ENCODE measurements at regions of chr6 and their contacts with region 1.

Region 1: DNA sequence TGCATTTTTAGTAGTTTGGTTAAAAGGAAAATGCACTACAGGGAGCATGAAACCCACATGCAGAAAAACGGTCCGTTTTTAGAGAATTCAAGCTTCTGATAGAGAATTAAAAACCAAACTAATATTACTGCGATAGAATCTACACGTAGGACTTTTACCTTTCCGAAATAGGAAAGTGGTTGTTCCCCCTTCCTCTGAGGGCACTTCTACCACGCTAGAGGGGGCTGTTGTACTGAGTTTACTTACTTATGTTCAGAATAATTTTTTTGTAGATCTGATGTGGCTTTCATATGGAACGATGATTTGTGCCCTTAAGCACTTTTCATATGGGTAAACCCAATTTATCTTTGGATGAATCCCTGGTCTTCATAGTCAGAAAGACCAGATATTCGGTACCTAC is 264.3 kb upstream of the PLN start:
- DNase-seq: peak; percentile 69
- H3K4me3 ChIP-seq: no peak overlapping the region
- H3K27ac ChIP-seq: no peak overlapping the region
- H3K4me1 ChIP-seq: peaks cover 0 to 32% (median 20%) of the 10 kb centered on the region in 4 donors
- H3K27me3 ChIP-seq: no peaks in the 10 kb centered on the region
- CTCF ChIP-seq: peak; percentile 38 to 78 (median 53)
- EP300 ChIP-seq: no peak
- POLR2A ChIP-seq: no peak

Region 2: GRCh38 chr6:118042855-118043254 is 240.9 kb before region 1 on chr6:
- intact Hi-C with region 1: no loop called
- DNase-seq: no peak
- H3K4me3 ChIP-seq: no peak overlapping the region
- H3K27ac ChIP-seq: no peak overlapping the region
- H3K4me1 ChIP-seq: no peaks in the 10 kb centered on the region
- H3K27me3 ChIP-seq: no peaks in the 10 kb centered on the region
- CTCF ChIP-seq: no peak
- EP300 ChIP-seq: no peak
- POLR2A ChIP-seq: no peak

Region 3: GRCh38 chr6:118354641-118355040 is 70.9 kb after region 1 on chr6:
- intact Hi-C with region 1: loop called (anchors 5 kb)
- DNase-seq: no peak
- H3K4me3 ChIP-seq: no peak overlapping the region
- H3K27ac ChIP-seq: no peak overlapping the region
- H3K4me1 ChIP-seq: peaks cover 0 to 49% (median 19%) of the 10 kb centered on the region in 4 donors
- H3K27me3 ChIP-seq: no peaks in the 10 kb centered on the region
- CTCF ChIP-seq: no peak
- EP300 ChIP-seq: no peak
- POLR2A ChIP-seq: no peak

Region 4: DNA sequence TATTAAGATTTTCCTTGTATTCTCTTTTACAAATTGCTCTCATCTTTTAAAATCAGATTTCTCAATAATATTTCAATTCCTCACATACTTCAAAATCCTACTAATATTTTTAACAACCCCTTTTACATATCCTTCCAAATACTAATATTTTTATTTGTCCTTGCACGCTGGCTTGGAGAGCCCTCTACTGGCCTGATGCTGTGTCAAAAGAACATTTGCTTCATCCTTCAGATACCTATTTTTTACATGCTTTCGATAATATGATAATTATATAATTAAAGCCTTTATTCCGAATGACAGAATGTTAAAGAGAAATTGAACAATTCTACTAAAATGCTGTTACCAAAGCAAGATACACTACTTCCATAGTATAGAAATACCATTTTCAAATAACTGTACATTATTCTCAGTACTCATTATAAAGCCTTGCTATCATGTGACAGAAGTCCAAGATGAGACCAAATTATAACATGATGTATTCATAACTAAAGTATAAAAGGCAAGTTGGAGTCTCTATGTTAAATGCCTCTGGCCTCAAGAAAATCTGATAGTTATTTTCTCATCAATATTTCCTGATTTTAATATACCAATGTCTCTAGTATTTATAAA is 225.3 kb after region 1 on chr6:
- intact Hi-C with region 1: loop called (anchors 2 kb)
- DNase-seq: no peak
- H3K4me3 ChIP-seq: no peak overlapping the region
- H3K27ac ChIP-seq: no peak overlapping the region
- H3K4me1 ChIP-seq: peaks cover 0 to 13% (median 5%) of the 10 kb centered on the region in 4 donors
- H3K27me3 ChIP-seq: no peaks in the 10 kb centered on the region
- CTCF ChIP-seq: peak; percentile 15 to 71 (median 43)
- EP300 ChIP-seq: no peak
- POLR2A ChIP-seq: no peak

Region 5: GRCh38 chr6:118551063-118552053 is 267.6 kb after region 1 on chr6:
- intact Hi-C with region 1: loop called (anchors 2 kb)
- DNase-seq: no peak
- H3K4me3 ChIP-seq: peak overlapping the region in 3 of 4 donors; percentile 42 to 59 (median 55)
- H3K27ac ChIP-seq: peak overlapping the region; percentile 58 to 84 (median 78)
- H3K4me1 ChIP-seq: peaks cover 0 to 55% (median 38%) of the 10 kb centered on the region in 4 donors
- H3K27me3 ChIP-seq: no peaks in the 10 kb centered on the region
- CTCF ChIP-seq: peak in 3 of 4 experiments; percentile 49 to 62 (median 56)
- EP300 ChIP-seq: no peak
- POLR2A ChIP-seq: no peak

Region 6: GRCh38 chr6:118580585-118581419 is 297.0 kb after region 1 on chr6:
- intact Hi-C with region 1: loop called (anchors 1 kb)
- DNase-seq: peak; percentile 66
- H3K4me3 ChIP-seq: no peak overlapping the region
- H3K27ac ChIP-seq: peak overlapping the region in 1 of 4 donors; percentile 33
- H3K4me1 ChIP-seq: peaks cover 0 to 16% (median 10%) of the 10 kb centered on the region in 4 donors
- H3K27me3 ChIP-seq: no peaks in the 10 kb centered on the region
- CTCF ChIP-seq: peak; percentile 42 to 71 (median 58)
- EP300 ChIP-seq: no peak
- POLR2A ChIP-seq: no peak

Region 7: GRCh38 chr6:118618679-118619377 is 335.1 kb after region 1 on chr6:
- intact Hi-C with region 1: loop called (anchors 5 kb)
- DNase-seq: peak; percentile 69
- H3K4me3 ChIP-seq: no peak overlapping the region
- H3K27ac ChIP-seq: no peak overlapping the region
- H3K4me1 ChIP-seq: peaks cover 0 to 20% (median 3%) of the 10 kb centered on the region in 4 donors
- H3K27me3 ChIP-seq: no peaks in the 10 kb centered on the region
- CTCF ChIP-seq: peak; percentile 76 to 87 (median 85)
- EP300 ChIP-seq: no peak
- POLR2A ChIP-seq: no peak

Region 8: DNA sequence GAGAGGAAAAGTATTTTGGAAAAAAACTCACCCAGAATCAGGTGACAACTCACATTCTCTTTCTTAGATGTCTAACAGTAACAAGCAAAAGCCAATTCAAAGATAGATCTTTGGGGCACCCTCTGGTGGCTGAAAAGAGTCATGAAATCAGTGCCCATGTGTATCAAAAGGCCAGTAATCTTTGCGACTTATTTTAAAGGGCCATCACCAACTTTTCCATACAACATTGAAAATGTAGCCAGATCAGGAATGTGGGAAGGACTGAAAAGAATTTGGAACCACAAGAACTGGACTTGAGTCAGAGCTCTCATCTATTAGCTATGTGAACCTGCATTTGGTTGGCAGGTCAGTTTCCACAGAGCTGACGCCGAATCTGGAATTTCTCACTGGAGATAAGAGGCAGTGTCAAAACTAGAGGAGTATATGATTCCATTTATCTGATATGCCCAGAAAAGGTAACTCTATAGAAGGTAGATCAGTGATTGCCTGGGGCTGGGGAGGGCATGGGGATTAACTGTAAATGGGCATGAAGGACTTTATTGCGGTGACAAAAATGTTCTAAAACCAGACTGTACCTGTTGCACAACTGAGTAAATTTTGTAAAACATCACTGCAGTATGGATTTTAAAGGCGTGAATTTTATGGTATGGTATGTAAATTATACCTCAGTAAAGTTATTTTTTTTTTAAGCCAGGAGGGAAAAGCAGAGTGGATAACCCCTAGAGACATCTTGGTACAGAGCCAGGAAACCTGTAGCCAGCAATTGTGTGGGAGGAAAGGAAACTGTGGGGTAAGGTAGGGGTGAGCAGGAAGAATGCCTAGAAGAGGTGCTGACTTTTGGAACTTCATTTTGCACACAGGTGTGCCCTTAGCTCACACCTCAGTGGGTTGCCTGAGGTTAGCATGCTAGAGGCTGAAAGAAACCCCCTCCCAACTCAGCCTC is 493.1 kb after region 1 on chr6:
- intact Hi-C with region 1: loop called (anchors 10 kb)
- DNase-seq: no peak
- H3K4me3 ChIP-seq: no peak overlapping the region
- H3K27ac ChIP-seq: no peak overlapping the region
- H3K4me1 ChIP-seq: peaks cover 0 to 10% (median 6%) of the 10 kb centered on the region in 4 donors
- H3K27me3 ChIP-seq: no peaks in the 10 kb centered on the region
- CTCF ChIP-seq: peak in 3 of 4 experiments; percentile 41 to 65 (median 52)
- EP300 ChIP-seq: no peak
- POLR2A ChIP-seq: no peak

Region 9: GRCh38 chr6:119463081-119463626 is 1179.4 kb after region 1 on chr6:
- intact Hi-C with region 1: no loop called
- DNase-seq: no peak
- H3K4me3 ChIP-seq: no peak overlapping the region
- H3K27ac ChIP-seq: no peak overlapping the region
- H3K4me1 ChIP-seq: peaks cover 0 to 5% (median 0%) of the 10 kb centered on the region in 4 donors
- H3K27me3 ChIP-seq: no peaks in the 10 kb centered on the region
- CTCF ChIP-seq: no peak
- EP300 ChIP-seq: no peak
- POLR2A ChIP-seq: no peak